Right ventricle myocardium inferior (tissue), 1 donor: ENCODE measurements at regions of chr19 and their contacts with region 1.

Region 1: DNA sequence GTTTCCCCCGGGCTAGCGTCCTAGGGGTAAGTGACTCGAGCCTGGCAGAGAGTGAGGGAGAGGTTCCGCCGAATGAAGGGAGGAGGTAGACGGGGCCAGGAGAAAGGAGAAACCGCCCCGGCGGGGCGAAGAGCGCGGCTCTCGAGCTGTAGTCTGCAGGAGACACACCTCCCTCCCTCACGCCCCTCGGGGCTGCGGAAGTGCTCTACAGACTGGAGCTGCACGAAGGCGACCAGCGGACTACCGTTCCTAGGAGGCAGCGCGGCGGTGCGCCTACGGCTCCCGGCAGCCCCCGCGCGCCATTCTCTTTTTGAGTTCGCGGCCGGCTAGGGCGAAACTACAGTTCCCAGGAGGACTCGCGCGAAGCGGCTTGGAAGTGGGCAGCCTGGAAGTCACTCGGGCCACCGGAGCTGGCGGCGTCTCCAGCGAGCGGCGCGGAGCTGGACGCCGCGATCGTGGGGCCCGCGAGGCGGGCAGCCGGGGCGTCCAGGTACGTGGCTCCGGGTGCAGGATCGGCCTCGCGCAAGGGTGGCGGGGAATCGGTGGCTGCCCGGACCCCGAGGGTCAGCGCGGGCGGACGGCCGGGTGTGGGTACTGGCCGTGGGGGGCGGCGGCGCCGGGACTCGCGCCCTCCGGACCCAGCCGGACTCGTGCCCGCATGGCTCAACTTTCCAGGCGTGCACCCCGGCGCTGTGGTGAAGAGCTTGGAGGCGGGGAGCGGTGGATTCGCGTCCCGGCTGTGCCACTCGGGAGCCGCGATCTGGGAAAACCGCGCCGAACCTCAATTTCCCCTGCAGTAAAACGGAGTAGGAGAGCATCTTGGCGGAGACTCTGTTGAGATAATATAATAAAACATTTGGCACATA is at the start of gene SIPA1L3:
- DNase-seq: peak; percentile 97
- ATAC-seq: peak; percentile 99
- total RNA-seq, gene SIPA1L3: 9.3 TPM

Region 2: DNA sequence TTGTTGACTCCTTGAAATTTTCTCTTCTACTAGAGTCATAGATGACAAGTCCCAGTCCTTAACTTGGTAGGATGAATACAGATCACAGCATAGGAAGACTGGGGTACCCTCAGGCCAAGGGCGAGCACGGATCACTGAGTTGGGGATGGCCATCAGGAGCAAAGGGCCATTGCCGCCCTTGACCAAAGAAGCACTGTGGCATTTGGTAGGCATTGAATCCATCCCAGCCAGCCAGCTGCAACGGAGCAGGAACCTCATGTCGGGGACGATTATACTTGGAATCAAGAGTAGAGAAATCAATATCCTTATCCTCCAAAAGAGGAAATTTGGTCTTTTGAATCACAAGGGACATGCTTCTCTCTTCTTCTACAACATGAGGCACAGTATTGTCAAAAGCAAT is 77.6 kb before region 1 on chr19:
- intact Hi-C with region 1: no loop called
- DNase-seq: no peak
- ATAC-seq: no peak

Region 3: GRCh38 chr19:37867831-37868230 is 39.3 kb before region 1 on chr19:
- intact Hi-C with region 1: no loop called
- DNase-seq: no peak
- ATAC-seq: no peak

Region 4: DNA sequence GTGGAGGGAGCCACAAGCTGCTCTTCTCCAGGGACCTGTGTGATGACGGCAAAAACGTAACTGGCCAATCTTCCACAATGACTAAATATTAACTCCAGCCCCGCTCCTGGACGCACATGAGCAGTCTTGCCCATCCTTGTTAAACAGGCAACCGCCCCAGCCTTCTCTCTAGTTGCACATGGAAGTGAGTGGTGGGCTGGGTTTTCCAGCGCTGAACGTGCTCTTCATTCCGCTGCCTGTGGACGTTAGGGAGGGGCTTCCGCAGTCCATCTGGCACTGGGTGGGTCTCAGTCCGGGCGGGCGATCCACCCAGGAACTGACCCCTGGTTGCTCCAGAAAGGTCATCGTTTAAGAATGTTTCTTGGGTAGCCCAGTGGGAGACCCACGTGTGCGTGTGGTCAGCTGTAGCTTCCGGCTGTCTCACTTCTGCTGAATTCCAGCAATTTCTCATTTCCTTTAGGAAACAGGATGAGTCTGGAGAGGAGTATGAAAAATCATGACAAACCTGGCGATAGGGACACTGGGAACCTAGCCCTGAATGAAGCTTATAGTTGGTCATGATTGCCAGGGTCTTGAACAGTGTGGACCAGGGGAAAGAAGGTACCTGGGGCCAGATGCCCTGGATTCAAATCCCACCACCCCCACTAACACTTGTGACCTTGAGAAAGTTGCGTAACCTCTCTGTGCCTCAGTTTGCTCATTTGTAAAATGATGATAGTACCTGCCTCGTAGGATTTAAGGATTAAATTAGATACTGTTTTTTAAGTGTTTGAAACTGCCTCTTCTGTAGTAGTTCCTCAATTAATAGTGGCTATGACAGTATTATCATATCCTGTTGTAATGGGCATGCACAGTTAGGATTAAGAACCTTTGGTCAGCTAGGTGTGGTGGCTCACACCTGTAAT is 92.5 kb after region 1 on chr19:
- intact Hi-C with region 1: loop called (anchors 1 kb)
- DNase-seq: no peak
- ATAC-seq: peak; percentile 78

Region 5: GRCh38 chr19:38095411-38096308 is 188.6 kb after region 1 on chr19:
- intact Hi-C with region 1: loop called (anchors 2 kb)
- DNase-seq: peak; percentile 76
- ATAC-seq: peak; percentile 40

Region 6: DNA sequence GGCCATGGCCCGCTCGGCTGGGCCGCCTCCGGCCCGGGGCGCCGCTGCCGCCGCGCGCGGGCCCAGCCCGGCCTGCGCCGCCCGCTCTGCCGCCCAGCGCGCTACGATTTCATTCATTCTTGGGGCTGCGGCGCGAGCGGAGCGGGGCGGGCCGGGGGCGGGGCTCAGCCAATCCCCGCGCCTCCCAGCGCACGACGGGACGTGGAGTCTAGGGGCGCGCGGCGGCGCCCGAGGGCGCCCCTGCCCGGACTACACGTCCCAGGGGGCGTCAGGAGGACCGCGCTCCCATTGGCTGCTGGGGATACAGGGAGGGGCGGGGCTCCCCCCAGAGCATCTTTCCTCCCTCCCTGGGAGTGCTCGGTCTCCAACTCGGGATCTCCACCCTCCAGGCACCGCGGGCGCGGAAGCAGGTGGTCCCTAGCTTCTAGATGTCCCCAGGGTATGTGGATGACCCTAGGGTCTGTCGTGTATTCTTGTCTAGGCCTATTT is 322.5 kb after region 1 on chr19:
- intact Hi-C with region 1: loop called (anchors 5 kb)
- DNase-seq: peak; percentile 75
- ATAC-seq: peak; percentile 84

Region 7: GRCh38 chr19:38335949-38336637 is 429.0 kb after region 1 on chr19:
- intact Hi-C with region 1: loop called (anchors 2 kb)
- DNase-seq: peak; percentile 97
- ATAC-seq: peak; percentile 93